ENCODE measurements at regions of chr9 and their contacts with region 1.

Region 1: GRCh38 chr9:115117999-115118878 is at the start of gene TNC:
- DNase-seq: peak; percentile 92
- H3K4me3 ChIP-seq: peak within 1 kb of the TSS; percentile 24 to 61 (median 58)
- H3K27ac ChIP-seq: peak within 1 kb of the TSS; percentile 83
- H3K4me1 ChIP-seq: peaks cover 65% of the 10 kb centered on the region
- H3K27me3 ChIP-seq: no peaks in the 10 kb centered on the region
- CTCF ChIP-seq: no peak
- total RNA-seq, gene TNC: 85.8 to 178 TPM

Region 2: DNA sequence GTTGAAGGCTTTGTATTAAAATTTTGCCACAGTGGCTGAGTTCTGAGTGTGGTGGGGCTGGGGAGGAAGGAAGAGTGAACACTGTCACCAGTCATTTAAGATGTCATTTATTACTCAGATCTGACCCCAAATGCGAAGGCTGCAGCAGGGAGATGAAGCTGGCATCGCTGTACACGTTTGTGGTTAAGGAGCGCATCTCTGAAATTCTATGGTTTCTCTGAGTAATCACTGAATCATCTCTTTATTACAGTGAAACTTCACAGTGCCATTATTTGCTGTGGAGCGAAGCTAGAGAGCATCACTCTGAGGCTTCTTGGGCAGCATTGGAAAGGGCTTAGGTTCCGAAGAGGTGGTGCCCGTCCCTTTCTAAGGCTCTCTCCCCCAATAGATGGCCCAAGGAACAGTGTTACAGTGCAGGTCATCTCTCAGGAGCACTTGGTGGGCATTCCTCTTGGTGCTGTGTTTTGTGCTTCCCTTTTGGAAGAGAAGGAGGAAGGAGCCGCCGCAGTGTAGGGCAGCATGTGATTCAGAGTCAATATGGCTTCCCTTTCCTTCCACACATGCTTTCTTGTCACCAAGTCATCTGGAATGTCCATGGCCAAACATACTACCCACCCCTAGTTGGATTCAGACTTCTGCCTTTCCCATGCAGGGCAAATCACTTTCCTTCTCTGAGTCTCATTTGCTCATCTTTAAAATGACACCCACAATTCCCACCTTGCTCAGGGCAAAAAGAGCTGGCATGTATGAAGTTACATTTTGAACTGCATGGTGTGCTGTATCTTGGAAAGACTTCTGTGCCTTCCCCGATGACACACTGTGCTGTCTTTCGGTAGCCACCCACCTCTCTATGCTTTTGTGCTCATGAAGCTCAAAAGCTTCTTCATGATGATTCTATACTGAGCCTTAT is 426.9 kb before region 1 on chr9:
- CTCF ChIA-PET with region 1: no interaction called
- dilution Hi-C with region 1: no loop called
- in situ Hi-C with region 1: no loop called
- intact Hi-C with region 1: loop called (anchors 10 kb)
- DNase-seq: peak; percentile 95
- H3K4me3 ChIP-seq: no peak overlapping the region
- H3K27ac ChIP-seq: peak overlapping the region; percentile 93
- H3K4me1 ChIP-seq: peaks cover 44% of the 10 kb centered on the region
- H3K27me3 ChIP-seq: no peaks in the 10 kb centered on the region
- CTCF ChIP-seq: no peak

Region 3: GRCh38 chr9:115013998-115014397 is 104.2 kb before region 1 on chr9:
- CTCF ChIA-PET with region 1: no interaction called
- dilution Hi-C with region 1: no loop called
- in situ Hi-C with region 1: no loop called
- intact Hi-C with region 1: loop called (anchors 5 kb)
- DNase-seq: peak; percentile 57
- H3K4me3 ChIP-seq: no peak overlapping the region
- H3K27ac ChIP-seq: no peak overlapping the region
- H3K4me1 ChIP-seq: peaks cover under 1% of the 10 kb centered on the region
- H3K27me3 ChIP-seq: no peaks in the 10 kb centered on the region
- CTCF ChIP-seq: peak; percentile 74 to 83

Region 4: DNA sequence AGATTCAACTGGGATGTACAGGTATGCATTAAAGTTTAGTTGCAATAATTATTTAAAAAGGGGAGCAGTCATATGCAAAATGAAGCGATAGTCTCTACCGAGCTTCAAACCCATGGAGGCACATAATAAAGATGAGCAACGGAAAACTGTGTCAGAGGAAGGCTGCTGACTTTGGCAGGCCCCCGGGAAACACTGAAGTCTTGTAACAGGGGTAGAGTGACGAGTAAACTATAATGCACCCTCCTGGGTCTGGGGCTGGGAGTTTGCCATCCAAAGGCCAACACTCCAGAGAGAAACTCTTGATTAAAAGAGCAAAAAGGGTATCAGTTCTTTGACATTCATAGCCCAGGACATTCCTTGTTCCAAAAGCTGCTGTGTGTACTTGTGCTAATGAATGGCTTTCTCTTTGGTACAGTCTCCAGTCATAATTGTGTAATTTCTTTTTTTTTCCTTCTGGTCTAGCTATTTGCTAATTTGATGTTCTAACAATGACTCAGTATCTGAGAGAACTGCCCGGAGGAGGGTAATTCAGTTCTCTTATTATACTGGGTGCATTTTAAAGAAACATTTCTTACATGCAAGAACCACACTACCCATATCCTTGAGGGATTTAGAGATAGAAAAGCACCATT is 59.4 kb before region 1 on chr9:
- CTCF ChIA-PET with region 1: no interaction called
- dilution Hi-C with region 1: no loop called
- in situ Hi-C with region 1: no loop called
- intact Hi-C with region 1: loop called (anchors 1 kb)
- DNase-seq: peak; percentile 90
- H3K4me3 ChIP-seq: no peak overlapping the region
- H3K27ac ChIP-seq: peak overlapping the region; percentile 87
- H3K4me1 ChIP-seq: peaks cover 48% of the 10 kb centered on the region
- H3K27me3 ChIP-seq: no peaks in the 10 kb centered on the region
- CTCF ChIP-seq: no peak

Region 5: GRCh38 chr9:115164511-115164974 is 46.3 kb after region 1 on chr9:
- CTCF ChIA-PET with region 1: no interaction called
- dilution Hi-C with region 1: loop called (anchors 5 kb)
- in situ Hi-C with region 1: no loop called
- intact Hi-C with region 1: loop called (anchors 2 kb)
- DNase-seq: peak; percentile 61
- H3K4me3 ChIP-seq: no peak overlapping the region
- H3K27ac ChIP-seq: peak overlapping the region; percentile 26
- H3K4me1 ChIP-seq: peaks cover 28% of the 10 kb centered on the region
- H3K27me3 ChIP-seq: no peaks in the 10 kb centered on the region
- CTCF ChIP-seq: no peak

Region 6: GRCh38 chr9:115250621-115251032 is 132.4 kb after region 1 on chr9:
- CTCF ChIA-PET with region 1: no interaction called
- dilution Hi-C with region 1: no loop called
- in situ Hi-C with region 1: no loop called
- intact Hi-C with region 1: loop called (anchors 1 kb)
- DNase-seq: peak; percentile 98
- H3K4me3 ChIP-seq: no peak overlapping the region
- H3K27ac ChIP-seq: peak overlapping the region; percentile 92
- H3K4me1 ChIP-seq: peaks cover 21% of the 10 kb centered on the region
- H3K27me3 ChIP-seq: no peaks in the 10 kb centered on the region
- CTCF ChIP-seq: peak; percentile 1 to 16

Region 7: DNA sequence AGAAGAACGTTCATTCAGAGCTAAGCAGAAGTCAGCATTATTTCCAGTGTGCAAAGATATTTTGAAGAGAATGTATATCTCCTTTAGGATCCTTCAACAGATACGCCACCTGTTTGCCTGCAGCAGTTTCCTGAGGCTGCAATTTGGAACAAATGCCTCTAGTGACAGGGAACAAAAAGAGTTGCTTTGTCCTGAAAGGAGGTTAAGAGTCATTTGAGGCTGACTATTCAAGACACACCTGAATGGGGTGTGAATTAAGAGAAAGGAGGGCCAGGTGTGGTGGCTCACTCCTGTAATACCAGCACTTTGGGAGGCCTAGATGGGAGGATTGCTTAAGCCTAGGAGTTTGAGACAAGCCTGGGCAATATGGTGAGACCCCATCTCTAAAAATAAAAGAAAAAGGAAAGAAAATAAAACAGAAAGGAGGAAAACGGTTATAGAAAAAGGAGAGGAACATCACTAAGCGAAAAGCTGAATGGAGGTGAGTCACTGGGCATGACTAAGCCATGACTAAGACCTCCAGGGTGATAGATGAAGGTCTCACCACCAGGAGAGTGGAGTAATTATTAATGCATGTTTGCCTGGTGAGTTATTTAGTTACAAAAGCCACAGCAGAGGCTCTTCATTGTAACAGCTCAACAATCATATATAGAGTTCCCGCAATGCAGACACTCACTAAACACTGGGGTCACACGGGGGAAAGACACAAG is 254.9 kb after region 1 on chr9:
- CTCF ChIA-PET with region 1: no interaction called
- dilution Hi-C with region 1: no loop called
- in situ Hi-C with region 1: no loop called
- intact Hi-C with region 1: loop called (anchors 2 kb)
- DNase-seq: peak; percentile 97
- H3K4me3 ChIP-seq: peak overlapping the region in 1 of 3 experiments; percentile 8
- H3K27ac ChIP-seq: peak overlapping the region; percentile 90
- H3K4me1 ChIP-seq: peaks cover 36% of the 10 kb centered on the region
- H3K27me3 ChIP-seq: no peaks in the 10 kb centered on the region
- CTCF ChIP-seq: peak in 1 of 2 donors; percentile 29

Region 8: GRCh38 chr9:115517335-115518075 is 399.3 kb after region 1 on chr9:
- CTCF ChIA-PET with region 1: no interaction called
- dilution Hi-C with region 1: no loop called
- in situ Hi-C with region 1: no loop called
- intact Hi-C with region 1: no loop called
- DNase-seq: no peak
- H3K4me3 ChIP-seq: no peak overlapping the region
- H3K27ac ChIP-seq: no peak overlapping the region
- H3K4me1 ChIP-seq: no peaks in the 10 kb centered on the region
- H3K27me3 ChIP-seq: no peaks in the 10 kb centered on the region
- CTCF ChIP-seq: no peak